Activated naive CD4-positive, alpha-beta T cell treated with anti-CD3 and anti-CD28 coated beads for 36 hours (primary cell): ENCODE measurements at regions of chr3 and their contacts with region 1.

Region 1: GRCh38 chr3:143016321-143016972 is 15.1 kb downstream of the U2SURP start:
- DNase-seq: no peak
- H3K4me3 Mint-ChIP-seq: no peak overlapping the region
- H3K27ac Mint-ChIP-seq: no peak overlapping the region
- H3K4me1 Mint-ChIP-seq: peaks cover 20% of the 10 kb centered on the region
- H3K27me3 Mint-ChIP-seq: no peaks in the 10 kb centered on the region

Region 2: GRCh38 chr3:143031327-143031726 is 14.9 kb after region 1 on chr3:
- CTCF ChIA-PET with region 1: interaction called, 4 read pairs
- intact Hi-C with region 1: loop called (anchors 2 kb)
- DNase-seq: no peak
- H3K4me3 Mint-ChIP-seq: no peak overlapping the region
- H3K27ac Mint-ChIP-seq: no peak overlapping the region
- H3K4me1 Mint-ChIP-seq: peaks cover 2% of the 10 kb centered on the region
- H3K27me3 Mint-ChIP-seq: no peaks in the 10 kb centered on the region

Region 3: GRCh38 chr3:143054011-143054410 is 37.6 kb after region 1 on chr3:
- CTCF ChIA-PET with region 1: interaction called, 3 read pairs
- intact Hi-C with region 1: loop called (anchors 5 kb)
- DNase-seq: no peak
- H3K4me3 Mint-ChIP-seq: no peak overlapping the region
- H3K27ac Mint-ChIP-seq: no peak overlapping the region
- H3K4me1 Mint-ChIP-seq: peaks cover 2% of the 10 kb centered on the region
- H3K27me3 Mint-ChIP-seq: no peaks in the 10 kb centered on the region

Region 4: GRCh38 chr3:143151004-143151731 is 134.7 kb after region 1 on chr3:
- CTCF ChIA-PET with region 1: no interaction called
- intact Hi-C with region 1: no loop called
- DNase-seq: no peak
- H3K4me3 Mint-ChIP-seq: no peak overlapping the region
- H3K27ac Mint-ChIP-seq: no peak overlapping the region
- H3K4me1 Mint-ChIP-seq: peaks cover 9% of the 10 kb centered on the region
- H3K27me3 Mint-ChIP-seq: no peaks in the 10 kb centered on the region